CD8-positive, alpha-beta T cell (primary cell): ENCODE measurements at regions of chr1 and their contacts with region 1.

Region 1: DNA sequence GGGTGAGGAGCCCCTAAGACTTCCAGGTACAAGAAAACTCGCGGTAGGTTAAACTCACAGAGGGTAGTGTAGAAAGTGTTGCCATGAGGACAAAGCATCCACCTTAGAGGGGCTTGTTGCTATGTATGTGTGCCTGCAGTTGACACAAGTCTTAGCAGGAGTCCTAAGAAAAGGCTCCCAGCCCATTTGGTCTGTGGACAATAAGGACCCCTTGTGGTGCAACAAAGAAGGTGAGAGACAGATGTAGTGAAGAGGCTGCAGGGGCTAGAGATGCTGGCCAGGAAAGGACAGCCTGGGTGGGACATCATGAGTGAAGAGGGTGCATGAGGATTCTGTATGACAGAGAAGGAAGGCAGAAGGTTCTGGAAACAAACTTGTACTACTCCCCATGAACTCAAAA is 36.3 kb upstream of the IL10 start:
- DNase-seq: peak; percentile 16 to 87 (median 54)
- ATAC-seq: peak; percentile 91
- H3K4me3 ChIP-seq: no peak overlapping the region
- H3K4me3 Mint-ChIP-seq: no peak overlapping the region
- H3K27ac ChIP-seq: no peak overlapping the region
- H3K27ac Mint-ChIP-seq: peak overlapping the region; percentile 10
- H3K4me1 ChIP-seq: peaks cover 25% of the 10 kb centered on the region
- H3K4me1 Mint-ChIP-seq: peaks cover 42% of the 10 kb centered on the region
- H3K27me3 ChIP-seq: no peaks in the 10 kb centered on the region
- H3K27me3 Mint-ChIP-seq: no peaks in the 10 kb centered on the region
- CTCF ChIP-seq: peak; percentile 50

Region 2: DNA sequence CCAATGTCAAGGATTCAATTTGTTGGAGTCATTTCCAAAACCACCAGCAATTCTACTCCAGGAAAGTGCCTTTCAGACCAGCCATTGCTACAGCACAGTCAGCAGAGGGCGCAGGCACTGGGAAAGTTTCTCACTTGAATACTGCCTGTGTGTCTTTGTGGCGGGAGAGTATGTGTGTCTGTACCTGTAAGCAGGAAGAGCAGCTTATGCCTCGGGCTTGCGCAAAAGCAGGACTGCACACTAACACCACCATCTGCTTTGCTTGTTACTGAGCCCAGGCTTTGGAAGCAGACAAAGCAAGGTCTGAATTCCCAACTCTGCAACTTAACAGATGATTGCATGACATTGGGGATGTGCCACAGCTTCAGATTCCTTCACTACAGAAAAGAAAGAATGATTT is 777.9 kb before region 1 on chr1:
- CTCF ChIA-PET with region 1: no interaction called
- POLR2A ChIA-PET with region 1: no interaction called
- intact Hi-C with region 1: no loop called
- DNase-seq: peak in 8 of 9 experiments; percentile 42 to 75 (median 58)
- ATAC-seq: peak; percentile 57
- H3K4me3 ChIP-seq: no peak overlapping the region
- H3K4me3 Mint-ChIP-seq: no peak overlapping the region
- H3K27ac ChIP-seq: no peak overlapping the region
- H3K27ac Mint-ChIP-seq: no peak overlapping the region
- H3K4me1 ChIP-seq: no peaks in the 10 kb centered on the region
- H3K4me1 Mint-ChIP-seq: peaks cover 9% of the 10 kb centered on the region
- H3K27me3 ChIP-seq: no peaks in the 10 kb centered on the region
- H3K27me3 Mint-ChIP-seq: peaks cover 13% of the 10 kb centered on the region
- CTCF ChIP-seq: peak; percentile 63

Region 3: GRCh38 chr1:206734499-206735142 is 74.0 kb before region 1 on chr1:
- CTCF ChIA-PET with region 1: interaction called, 628 read pairs
- POLR2A ChIA-PET with region 1: interaction called, 75 read pairs
- intact Hi-C with region 1: loop called (anchors 1 kb)
- DNase-seq: peak; percentile 66 to 87 (median 82)
- ATAC-seq: peak; percentile 57
- H3K4me3 ChIP-seq: no peak overlapping the region
- H3K4me3 Mint-ChIP-seq: no peak overlapping the region
- H3K27ac ChIP-seq: peak overlapping the region in 1 of 2 experiments; percentile 54
- H3K27ac Mint-ChIP-seq: peak overlapping the region; percentile 91
- H3K4me1 ChIP-seq: peaks cover 55% of the 10 kb centered on the region
- H3K4me1 Mint-ChIP-seq: peaks cover 55% of the 10 kb centered on the region
- H3K27me3 ChIP-seq: no peaks in the 10 kb centered on the region
- H3K27me3 Mint-ChIP-seq: no peaks in the 10 kb centered on the region
- CTCF ChIP-seq: peak; percentile 90

Region 4: DNA sequence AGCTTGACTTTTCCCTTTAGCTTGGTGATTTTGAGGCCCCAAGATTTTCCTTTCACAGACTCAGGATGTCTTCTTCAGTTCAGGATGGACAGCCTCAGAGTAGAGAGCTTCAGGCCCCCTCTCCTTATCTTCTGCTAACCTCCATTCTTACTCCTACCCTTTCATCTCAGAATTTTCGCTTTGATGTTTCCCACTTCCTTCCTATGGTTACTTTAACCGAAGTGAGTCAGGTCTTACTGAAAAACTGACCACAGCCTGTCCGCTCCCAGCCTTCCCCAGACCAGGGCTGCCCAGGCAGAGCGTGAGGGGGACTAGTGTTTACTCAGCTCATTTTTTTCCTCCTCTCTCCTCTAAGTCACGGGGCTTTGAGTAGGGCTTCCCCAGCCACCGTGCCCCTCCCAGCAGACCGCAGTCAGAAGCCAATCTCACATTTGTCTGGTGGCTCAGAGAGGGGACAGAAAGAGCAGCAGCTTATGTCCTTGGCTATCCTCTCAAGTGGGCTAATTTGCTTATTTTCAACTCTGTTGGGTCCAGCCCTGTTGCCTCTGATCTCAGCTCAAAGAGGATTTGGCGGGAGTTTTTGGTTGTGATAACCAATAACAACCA is 42.3 kb before region 1 on chr1:
- CTCF ChIA-PET with region 1: interaction called, 18 read pairs
- POLR2A ChIA-PET with region 1: interaction called, 18 read pairs
- intact Hi-C with region 1: loop called (anchors 1 to 2 kb)
- DNase-seq: peak; percentile 47 to 89 (median 77)
- ATAC-seq: peak; percentile 77
- H3K4me3 ChIP-seq: peak overlapping the region; percentile 3 to 9
- H3K4me3 Mint-ChIP-seq: peak overlapping the region; percentile 61
- H3K27ac ChIP-seq: no peak overlapping the region
- H3K27ac Mint-ChIP-seq: peak overlapping the region; percentile 82
- H3K4me1 ChIP-seq: peaks cover 63% of the 10 kb centered on the region
- H3K4me1 Mint-ChIP-seq: peaks cover 61% of the 10 kb centered on the region
- H3K27me3 ChIP-seq: no peaks in the 10 kb centered on the region
- H3K27me3 Mint-ChIP-seq: no peaks in the 10 kb centered on the region
- CTCF ChIP-seq: no peak

Region 5: GRCh38 chr1:206833106-206833680 is 24.6 kb after region 1 on chr1:
- CTCF ChIA-PET with region 1: interaction called, 18 read pairs
- POLR2A ChIA-PET with region 1: interaction called, 4 read pairs
- intact Hi-C with region 1: no loop called
- DNase-seq: no peak
- ATAC-seq: no peak
- H3K4me3 ChIP-seq: no peak overlapping the region
- H3K4me3 Mint-ChIP-seq: no peak overlapping the region
- H3K27ac ChIP-seq: no peak overlapping the region
- H3K27ac Mint-ChIP-seq: no peak overlapping the region
- H3K4me1 ChIP-seq: peaks cover 25% of the 10 kb centered on the region
- H3K4me1 Mint-ChIP-seq: peaks cover 47% of the 10 kb centered on the region
- H3K27me3 ChIP-seq: no peaks in the 10 kb centered on the region
- H3K27me3 Mint-ChIP-seq: no peaks in the 10 kb centered on the region
- CTCF ChIP-seq: no peak

Region 6: DNA sequence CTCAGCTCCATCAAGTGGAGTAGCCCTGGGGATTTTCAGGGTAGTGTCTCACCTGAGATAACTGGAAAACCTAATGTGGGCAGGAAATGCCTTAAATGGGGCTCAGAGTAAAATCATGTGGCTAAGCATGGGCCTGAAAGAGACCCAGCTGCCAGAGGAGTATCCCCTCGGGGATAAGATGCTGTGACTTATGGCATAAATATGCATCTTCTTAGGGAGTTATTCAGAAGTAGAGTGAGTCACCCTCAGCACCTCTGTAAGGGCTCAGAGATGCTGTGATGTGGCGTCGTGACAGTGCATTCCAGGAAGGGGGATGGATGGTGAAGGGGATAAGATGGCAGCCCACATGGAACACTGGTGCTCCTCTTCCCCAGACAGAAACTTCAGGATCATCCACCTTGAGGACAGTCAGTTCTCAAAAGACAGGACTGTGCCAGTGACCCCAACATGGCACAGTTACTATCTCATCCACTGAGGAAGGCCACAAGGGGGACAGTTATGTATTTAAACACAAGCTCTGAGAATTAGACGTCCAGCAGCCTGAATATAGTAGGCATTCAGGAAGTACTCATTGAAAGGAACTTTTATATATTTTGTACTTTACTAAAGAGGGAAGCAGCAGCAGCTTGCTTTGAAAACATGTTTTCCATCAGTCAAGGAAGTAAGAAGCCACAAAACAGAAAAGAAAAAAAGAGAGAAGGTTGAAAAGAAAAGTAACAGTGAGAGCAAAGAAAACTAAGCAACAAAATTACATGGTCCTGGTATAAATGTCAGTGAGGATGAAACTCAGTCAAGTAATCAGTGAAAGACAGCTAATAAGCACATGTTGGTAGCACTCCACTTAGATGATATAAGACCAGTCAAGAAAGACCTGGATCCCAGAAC is 96.9 kb after region 1 on chr1:
- CTCF ChIA-PET with region 1: interaction called, 17 read pairs
- POLR2A ChIA-PET with region 1: interaction called, 8 read pairs
- intact Hi-C with region 1: no loop called
- DNase-seq: peak in 4 of 9 experiments; percentile 34 to 56 (median 44)
- ATAC-seq: peak; percentile 51
- H3K4me3 ChIP-seq: peak overlapping the region in 1 of 2 experiments; percentile 7
- H3K4me3 Mint-ChIP-seq: peak overlapping the region; percentile 66
- H3K27ac ChIP-seq: peak overlapping the region; percentile 5 to 55
- H3K27ac Mint-ChIP-seq: peak overlapping the region; percentile 94
- H3K4me1 ChIP-seq: peaks cover 68% of the 10 kb centered on the region
- H3K4me1 Mint-ChIP-seq: peaks cover 87% of the 10 kb centered on the region
- H3K27me3 ChIP-seq: no peaks in the 10 kb centered on the region
- H3K27me3 Mint-ChIP-seq: no peaks in the 10 kb centered on the region
- CTCF ChIP-seq: no peak

Region 7: GRCh38 chr1:207097871-207098324 is 289.3 kb after region 1 on chr1:
- CTCF ChIA-PET with region 1: no interaction called
- POLR2A ChIA-PET with region 1: no interaction called
- intact Hi-C with region 1: no loop called
- DNase-seq: no peak
- ATAC-seq: no peak
- H3K4me3 ChIP-seq: no peak overlapping the region
- H3K4me3 Mint-ChIP-seq: no peak overlapping the region
- H3K27ac ChIP-seq: no peak overlapping the region
- H3K27ac Mint-ChIP-seq: no peak overlapping the region
- H3K4me1 ChIP-seq: no peaks in the 10 kb centered on the region
- H3K4me1 Mint-ChIP-seq: no peaks in the 10 kb centered on the region
- H3K27me3 ChIP-seq: no peaks in the 10 kb centered on the region
- H3K27me3 Mint-ChIP-seq: no peaks in the 10 kb centered on the region
- CTCF ChIP-seq: no peak